ENCODE measurements at regions of chr18 and their contacts with region 1.

Region 1: DNA sequence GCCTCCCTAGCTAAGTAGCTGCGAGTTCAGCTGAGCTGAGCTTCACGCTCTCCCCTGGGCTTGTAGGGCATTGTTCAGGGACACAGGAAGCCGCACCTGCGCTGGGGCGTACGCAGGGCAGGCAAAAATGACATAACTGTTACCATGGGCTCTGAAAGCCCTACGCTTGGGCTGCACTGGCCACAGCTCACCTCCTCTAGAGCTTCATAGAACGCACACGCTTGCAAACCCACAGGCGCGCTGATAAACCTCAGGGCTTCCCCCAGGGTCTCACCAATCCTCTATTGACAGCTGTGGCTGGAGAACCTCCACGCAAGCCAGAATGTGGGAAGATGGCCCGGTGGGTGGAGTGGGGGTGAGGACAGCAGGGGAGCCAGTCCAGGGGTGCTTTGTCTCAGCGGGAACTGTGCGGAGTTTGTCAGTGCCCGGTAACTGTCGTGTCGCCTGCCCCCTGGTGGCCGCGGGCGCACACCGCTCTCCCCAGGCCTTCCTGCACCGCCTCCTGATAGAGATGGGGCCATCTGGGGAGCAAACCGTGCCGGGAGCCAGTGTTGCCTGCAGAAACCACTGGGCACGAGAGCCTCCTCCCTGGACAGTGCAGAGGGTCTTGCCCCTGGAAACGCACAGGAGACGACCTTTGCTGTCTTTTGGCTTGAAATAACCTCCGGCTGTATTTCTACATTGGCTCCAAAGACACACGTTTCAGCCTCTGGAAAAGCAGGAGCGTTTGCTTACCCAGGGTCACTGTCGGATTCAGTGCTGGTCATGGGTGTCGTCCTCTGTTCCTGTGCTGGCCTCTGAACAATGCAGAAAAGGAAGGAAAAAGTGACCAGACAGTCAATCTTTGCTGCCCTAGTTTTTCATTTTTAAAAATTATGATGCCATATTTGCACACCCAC is 17.0 kb upstream of the CIDEA start:
- DNase-seq: peak; percentile 88
- ATAC-seq: peak; percentile 99

Region 2: DNA sequence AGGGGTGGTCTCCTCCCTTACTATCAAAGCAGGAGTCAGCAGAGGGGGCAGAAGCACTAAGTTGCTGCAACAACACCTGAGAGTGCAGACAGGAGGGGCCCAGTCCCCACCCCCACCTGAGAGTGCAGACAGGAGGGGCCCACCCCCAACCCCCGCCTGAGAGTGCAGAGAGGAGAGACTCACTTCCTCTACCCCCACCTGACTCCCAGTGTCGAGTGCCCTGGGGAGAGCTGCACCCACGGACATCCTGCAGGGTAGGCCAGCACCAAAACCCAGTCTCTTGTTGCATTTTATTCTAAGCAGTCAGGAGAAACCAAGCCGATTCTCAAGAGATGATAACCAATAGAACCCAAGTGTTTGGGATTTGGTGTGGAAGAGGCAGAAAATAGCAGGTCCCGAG is 1633.0 kb before region 1 on chr18:
- intact Hi-C with region 1: loop called (anchors 10 kb)
- DNase-seq: no peak
- ATAC-seq: no peak

Region 3: DNA sequence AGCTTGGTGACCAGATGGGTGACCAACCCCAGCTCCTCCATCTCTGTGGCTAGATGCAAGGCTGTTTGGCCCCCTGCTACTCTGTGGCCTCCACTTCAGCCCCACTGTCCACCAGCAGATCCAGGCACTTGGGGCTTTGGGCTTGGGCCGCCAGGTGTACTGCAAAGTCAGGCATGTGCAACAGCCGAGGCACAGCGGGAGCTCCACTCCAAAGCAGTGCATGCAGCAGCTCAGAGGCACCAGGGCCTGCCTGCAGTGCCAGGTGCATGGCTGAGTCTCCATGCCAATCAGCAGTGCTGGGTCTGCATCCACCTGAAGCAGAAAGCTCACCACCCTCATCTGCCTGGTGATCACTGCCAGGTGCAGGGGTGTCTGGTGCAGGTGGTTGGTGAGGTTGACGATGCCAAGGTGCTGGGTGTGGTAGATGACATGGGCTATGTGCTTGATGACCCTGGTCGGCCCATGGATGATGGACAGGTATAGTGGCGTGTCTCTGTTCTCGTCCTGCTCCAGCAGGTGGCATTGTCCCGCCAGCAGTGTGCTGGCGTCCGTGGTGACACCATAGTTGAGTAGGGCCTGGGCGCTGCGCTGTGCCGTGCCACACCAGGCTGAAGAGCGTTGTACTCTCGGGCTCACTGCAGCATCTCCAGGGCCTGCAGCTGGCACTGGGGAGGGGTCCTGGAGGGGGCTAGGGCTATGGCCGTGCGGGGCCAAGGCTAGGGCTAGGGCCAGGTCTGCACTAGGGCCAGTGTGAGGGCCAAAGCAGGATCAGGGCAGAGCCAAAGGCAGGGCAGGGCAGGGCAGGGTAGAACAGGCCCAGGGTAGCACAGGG is 144.6 kb before region 1 on chr18:
- intact Hi-C with region 1: loop called (anchors 10 kb)
- DNase-seq: peak; percentile 60
- ATAC-seq: peak; percentile 88

Region 4: DNA sequence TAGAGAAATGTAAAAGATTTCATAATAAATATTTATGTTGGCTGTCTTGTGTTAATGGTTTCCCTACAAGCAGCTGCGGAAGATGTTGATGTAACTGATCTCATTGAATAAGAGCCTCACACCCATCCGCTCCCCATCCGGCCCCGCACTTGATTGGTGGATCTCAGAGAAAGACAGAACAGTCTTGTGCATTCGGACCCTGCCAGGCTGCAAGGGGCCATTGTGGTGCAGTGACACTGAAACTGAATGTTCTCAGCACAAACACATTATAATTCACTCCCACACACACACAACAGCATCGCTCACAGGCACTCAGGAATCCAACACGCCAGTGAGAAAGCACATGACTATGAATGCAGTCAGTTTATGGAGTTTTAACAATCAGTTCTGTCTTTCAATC is 218.3 kb after region 1 on chr18:
- intact Hi-C with region 1: no loop called
- DNase-seq: no peak
- ATAC-seq: no peak